Left ventricle myocardium superior (tissue), 1 donor: ENCODE measurements at regions of chr5 and their contacts with region 1.

Region 1: GRCh38 chr5:129767906-129768380 is 20.0 kb downstream of the MINAR2 start:
- DNase-seq: peak; percentile 30
- ATAC-seq: peak; percentile 89

Region 2: GRCh38 chr5:128905571-128906110 is 862.3 kb before region 1 on chr5:
- intact Hi-C with region 1: loop called (anchors 10 kb)
- DNase-seq: no peak
- ATAC-seq: peak; percentile 78

Region 3: DNA sequence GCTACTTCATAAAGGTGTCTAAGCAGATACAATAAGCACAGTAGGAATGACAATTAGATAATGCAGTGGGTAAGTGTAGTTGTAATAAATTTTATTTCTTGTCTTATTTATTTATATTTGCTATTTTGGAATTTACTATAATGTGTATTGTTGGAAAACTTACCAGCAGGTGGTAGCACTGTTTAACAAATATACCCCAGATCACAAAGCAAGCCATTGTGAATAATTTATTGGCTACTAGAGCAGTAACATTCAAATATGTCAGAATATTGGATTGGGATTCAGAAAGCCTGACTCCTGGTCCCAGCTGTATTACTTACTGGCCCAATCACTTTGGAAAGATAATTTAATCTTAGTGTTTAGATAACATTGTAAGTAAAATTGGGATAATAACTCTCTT is 595.4 kb before region 1 on chr5:
- intact Hi-C with region 1: loop called (anchors 5 kb)
- DNase-seq: no peak
- ATAC-seq: peak; percentile 65

Region 4: DNA sequence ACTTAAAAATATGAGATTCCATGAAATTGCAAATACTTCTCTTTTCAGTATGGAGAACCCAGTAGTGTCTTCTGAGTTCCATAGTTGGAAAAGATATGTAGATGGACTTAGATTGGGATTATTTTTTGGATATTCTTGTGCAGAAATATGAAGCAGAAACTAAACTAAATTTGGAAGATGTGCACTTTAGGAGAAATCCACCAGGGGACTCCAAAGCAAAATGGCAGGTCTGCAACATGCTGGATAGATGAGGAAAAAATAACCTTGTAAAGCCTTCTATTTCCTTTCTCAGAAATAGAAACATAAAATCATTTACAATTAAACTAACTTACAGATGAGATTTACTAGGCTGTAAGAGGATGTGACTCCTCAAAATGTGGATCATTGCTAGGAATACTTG is 69.3 kb before region 1 on chr5:
- intact Hi-C with region 1: no loop called
- DNase-seq: no peak
- ATAC-seq: no peak